GM12878 (cell line): ENCODE measurements at regions of chr11 and their contacts with region 1.

Region 1: DNA sequence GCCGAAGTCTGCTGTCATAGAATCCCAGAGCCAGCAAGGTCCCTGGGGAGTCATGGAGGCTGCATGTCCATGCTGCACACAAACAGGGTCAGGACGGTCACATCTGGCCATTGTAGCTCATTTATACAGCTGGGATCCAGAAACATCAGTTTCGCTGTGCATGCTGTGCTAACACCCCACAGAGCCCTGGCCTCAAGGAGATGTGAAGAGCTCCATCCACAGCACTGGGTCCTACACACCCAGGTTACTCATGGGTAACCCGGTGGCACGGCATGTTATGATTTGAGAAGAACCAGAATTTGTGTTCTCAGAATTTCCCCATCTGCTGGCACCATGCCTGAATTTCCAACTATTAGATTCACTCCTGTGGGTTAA is 146.3 kb upstream of the ARHGAP20 start:
- DNase-seq: no peak
- ATAC-seq: peak; percentile 59
- H3K4me3 ChIP-seq: no peak overlapping the region
- H3K27ac ChIP-seq: no peak overlapping the region
- H3K4me1 ChIP-seq: peaks cover 10% of the 10 kb centered on the region
- H3K27me3 ChIP-seq: no peaks in the 10 kb centered on the region
- CTCF ChIP-seq: no peak
- EP300 ChIP-seq: no peak
- POLR2A ChIP-seq: no peak
- RAD21 ChIP-seq: no peak

Region 2: GRCh38 chr11:110715541-110715940 is 143.0 kb before region 1 on chr11:
- CTCF ChIA-PET with region 1: no interaction called
- POLR2A ChIA-PET with region 1: no interaction called
- RAD21 ChIA-PET with region 1: no interaction called
- SMC1A ChIA-PET with region 1: no interaction called
- in situ Hi-C with region 1: no loop called
- intact Hi-C with region 1: no loop called
- DNase-seq: no peak
- ATAC-seq: no peak
- H3K4me3 ChIP-seq: no peak overlapping the region
- H3K27ac ChIP-seq: no peak overlapping the region
- H3K4me1 ChIP-seq: no peaks in the 10 kb centered on the region
- H3K27me3 ChIP-seq: peaks cover 11% of the 10 kb centered on the region in 2 experiments
- CTCF ChIP-seq: no peak
- EP300 ChIP-seq: no peak
- POLR2A ChIP-seq: no peak
- RAD21 ChIP-seq: no peak

Region 3: DNA sequence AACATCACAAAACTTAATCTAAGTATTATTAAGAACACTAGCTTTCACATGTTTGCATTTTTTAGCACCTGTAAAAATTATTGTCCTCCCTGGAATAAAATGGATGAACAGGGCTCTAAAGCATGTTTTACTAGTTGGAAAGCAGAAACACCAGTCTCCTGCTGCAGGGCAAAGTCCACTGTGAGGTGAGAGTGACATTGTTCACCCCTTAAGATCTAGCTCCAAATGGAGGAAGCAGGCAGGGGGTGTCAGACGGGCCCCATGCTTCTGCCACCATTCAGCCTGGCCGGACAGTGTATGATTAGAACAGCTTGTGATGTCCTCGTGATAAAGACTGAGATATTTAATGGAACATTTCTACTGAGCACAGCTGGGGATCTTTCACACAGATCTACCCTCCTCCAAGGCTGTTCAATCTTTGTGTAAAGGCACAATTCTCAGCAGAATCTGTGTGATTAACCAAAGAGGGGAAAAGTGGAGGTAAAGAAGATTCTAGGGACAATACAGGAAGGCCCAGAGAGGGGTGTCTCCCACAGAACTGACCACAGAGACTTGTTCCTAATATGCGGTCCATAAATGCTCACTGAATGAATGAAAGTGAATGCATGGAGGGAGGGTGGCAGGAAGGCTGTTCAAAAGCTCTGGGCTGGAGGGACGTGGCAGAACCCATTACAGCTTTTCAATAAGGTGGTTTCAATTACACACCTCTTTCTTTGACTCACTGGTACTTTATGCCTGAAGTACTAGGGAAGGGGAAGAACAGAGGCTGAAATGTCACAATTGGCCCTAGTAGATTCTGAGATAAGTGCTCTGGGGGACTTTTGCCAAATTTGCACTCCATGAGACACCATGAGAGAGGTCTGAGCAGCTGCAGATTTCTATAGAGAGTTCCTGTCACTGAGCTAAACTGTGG is 92.8 kb after region 1 on chr11:
- CTCF ChIA-PET with region 1: no interaction called
- POLR2A ChIA-PET with region 1: no interaction called
- RAD21 ChIA-PET with region 1: no interaction called
- SMC1A ChIA-PET with region 1: interaction called, 10 read pairs
- in situ Hi-C with region 1: no loop called
- intact Hi-C with region 1: no loop called
- DNase-seq: peak; percentile 19
- ATAC-seq: peak; percentile 81
- H3K4me3 ChIP-seq: no peak overlapping the region
- H3K27ac ChIP-seq: no peak overlapping the region
- H3K4me1 ChIP-seq: peaks cover 3% of the 10 kb centered on the region
- H3K27me3 ChIP-seq: no peaks in the 10 kb centered on the region
- CTCF ChIP-seq: no peak
- EP300 ChIP-seq: no peak
- POLR2A ChIP-seq: no peak
- RAD21 ChIP-seq: no peak